WTC11 (cell line): ENCODE measurements at regions of chr16 and their contacts with region 1.

Region 1: DNA sequence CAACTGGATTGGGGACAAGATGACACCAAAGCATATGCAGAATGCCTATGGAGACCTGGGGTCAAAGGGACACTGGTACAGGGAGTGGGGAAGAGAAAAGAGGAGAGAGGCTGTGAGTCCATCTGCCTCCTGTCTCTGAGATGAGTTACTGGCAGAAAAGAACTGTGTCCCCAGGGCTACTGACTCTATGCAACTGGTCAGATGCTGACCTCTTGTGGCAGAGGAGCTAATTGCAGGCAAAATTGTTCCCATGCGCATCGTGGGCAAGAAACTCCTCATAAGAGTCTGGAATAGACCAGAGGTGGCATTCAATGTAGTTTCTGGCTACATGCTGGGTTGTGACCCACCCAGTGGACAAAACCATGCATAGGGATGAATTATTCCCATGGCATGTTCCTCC is 26.1 kb upstream of the MLKL start:
- DNase-seq: peak; percentile 80
- ATAC-seq: peak; percentile 51
- H3K4me3 Mint-ChIP-seq: no peak overlapping the region
- H3K27ac Mint-ChIP-seq: no peak overlapping the region
- H3K4me1 Mint-ChIP-seq: peaks cover 25% of the 10 kb centered on the region
- H3K27me3 Mint-ChIP-seq: no peaks in the 10 kb centered on the region
- CTCF ChIP-seq: peak; percentile 54; the same call in 1 of the 2 replicates

Region 2: GRCh38 chr16:74666425-74667254 is 60.1 kb before region 1 on chr16 and contains the start of gene RFWD3:
- CTCF ChIA-PET with region 1: interaction called, 15 read pairs
- POLR2A ChIA-PET with region 1: interaction called, 3 read pairs
- DNase-seq: peak; percentile 96
- ATAC-seq: peak; percentile 99
- H3K4me3 Mint-ChIP-seq: peak within 1 kb of the TSS; percentile 85
- H3K27ac Mint-ChIP-seq: peak within 1 kb of the TSS; percentile 93
- H3K4me1 Mint-ChIP-seq: peaks cover 17% of the 10 kb centered on the region
- H3K27me3 Mint-ChIP-seq: peaks cover 4% of the 10 kb centered on the region
- CTCF ChIP-seq: no peak
- total RNA-seq, gene RFWD3: 78.8 to 109 TPM (median 86.2 TPM) in 3 replicates

Region 3: GRCh38 chr16:74709441-74709877 is 17.3 kb before region 1 on chr16:
- CTCF ChIA-PET with region 1: interaction called, 63 read pairs
- POLR2A ChIA-PET with region 1: no interaction called
- DNase-seq: peak; percentile 87
- ATAC-seq: peak; percentile 89
- H3K4me3 Mint-ChIP-seq: no peak overlapping the region
- H3K27ac Mint-ChIP-seq: no peak overlapping the region
- H3K4me1 Mint-ChIP-seq: peaks cover 8% of the 10 kb centered on the region
- H3K27me3 Mint-ChIP-seq: no peaks in the 10 kb centered on the region
- CTCF ChIP-seq: peak; percentile 90

Region 4: DNA sequence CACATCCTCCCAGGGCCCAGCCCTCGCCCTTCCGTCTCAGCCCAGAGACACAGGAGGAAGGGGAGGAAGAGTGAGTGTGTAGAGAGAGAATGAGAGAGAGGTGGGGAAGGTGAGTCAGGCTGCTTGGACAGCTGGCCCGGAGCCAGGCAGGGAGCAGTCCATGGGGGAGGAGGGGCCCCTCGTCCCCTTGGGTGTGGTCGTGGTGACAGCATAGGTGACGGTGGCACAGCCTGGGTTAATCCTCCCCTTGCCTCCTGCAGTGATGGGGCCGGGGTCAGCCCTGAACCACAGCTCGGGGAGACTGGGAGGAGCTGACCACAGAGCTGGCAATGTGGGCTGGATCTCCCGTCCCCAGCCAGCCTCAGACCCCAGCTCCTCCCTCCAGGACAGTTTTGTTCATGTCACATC is 11.4 kb after region 1 on chr16:
- CTCF ChIA-PET with region 1: interaction called, 30 read pairs
- POLR2A ChIA-PET with region 1: no interaction called
- DNase-seq: no peak
- ATAC-seq: no peak
- H3K4me3 Mint-ChIP-seq: no peak overlapping the region
- H3K27ac Mint-ChIP-seq: no peak overlapping the region
- H3K4me1 Mint-ChIP-seq: peaks cover 49% of the 10 kb centered on the region
- H3K27me3 Mint-ChIP-seq: no peaks in the 10 kb centered on the region
- CTCF ChIP-seq: no peak

Region 5: GRCh38 chr16:74813109-74813641 is 86.5 kb after region 1 on chr16:
- CTCF ChIA-PET with region 1: interaction called, 15 read pairs
- POLR2A ChIA-PET with region 1: no interaction called
- DNase-seq: peak; percentile 96
- ATAC-seq: peak; percentile 98
- H3K4me3 Mint-ChIP-seq: no peak overlapping the region
- H3K27ac Mint-ChIP-seq: no peak overlapping the region
- H3K4me1 Mint-ChIP-seq: peaks cover 36% of the 10 kb centered on the region
- H3K27me3 Mint-ChIP-seq: peaks cover 32% of the 10 kb centered on the region
- CTCF ChIP-seq: peak; percentile 91